Stomach (tissue), 19 donors: ENCODE measurements at regions of chr18 and their contacts with region 1.

Region 1: GRCh38 chr18:22800551-22800951 is 132.6 kb upstream of the RBBP8 start:
- DNase-seq: no peak
- H3K4me3 ChIP-seq: no peak overlapping the region
- H3K27ac ChIP-seq: no peak overlapping the region
- H3K4me1 ChIP-seq: peaks cover 0 to 5% (median 0%) of the 10 kb centered on the region in 4 donors
- H3K27me3 ChIP-seq: no peaks in the 10 kb centered on the region
- CTCF ChIP-seq: no peak
- EP300 ChIP-seq: no peak
- POLR2A ChIP-seq: no peak

Region 2: DNA sequence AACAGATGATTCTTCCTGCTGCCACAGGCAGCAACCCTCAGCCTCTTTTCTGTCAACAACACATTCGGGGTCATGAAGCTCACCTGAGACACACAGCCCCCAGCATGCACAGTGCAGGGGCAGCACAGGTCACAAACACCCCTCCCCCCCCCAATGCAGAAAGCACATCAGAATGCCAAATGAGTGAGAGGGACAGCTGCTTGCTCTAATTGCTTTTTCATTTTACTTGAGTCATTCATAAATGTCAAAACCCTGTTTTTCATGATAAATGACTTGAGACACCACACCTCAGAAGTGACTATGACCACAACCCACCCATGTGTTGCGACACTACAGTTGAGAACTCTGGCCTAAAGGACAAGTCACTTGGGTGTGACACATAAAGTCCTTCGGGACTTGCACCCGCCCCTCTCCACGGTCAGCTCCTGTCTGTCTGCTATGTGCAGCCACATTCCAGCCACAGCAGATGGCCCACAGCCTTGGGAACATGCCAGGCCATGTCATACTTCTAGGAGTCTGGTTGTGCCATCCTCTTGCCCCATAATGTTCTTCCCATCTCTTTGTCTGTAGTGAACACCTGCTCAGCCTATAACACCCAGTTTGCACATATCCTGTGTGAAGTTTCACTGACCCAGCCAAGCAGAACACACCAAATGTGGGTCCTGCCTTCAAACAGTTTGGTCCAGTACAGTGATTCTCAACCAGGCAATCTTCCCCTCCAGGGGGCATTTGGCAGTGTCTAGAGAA is 622.3 kb after region 1 on chr18:
- intact Hi-C with region 1: loop called (anchors 10 kb)
- DNase-seq: peak; percentile 57 to 79
- H3K4me3 ChIP-seq: no peak overlapping the region
- H3K27ac ChIP-seq: peak overlapping the region in 2 of 5 donors; percentile 40 to 43
- H3K4me1 ChIP-seq: peaks cover 0 to 5% (median 0%) of the 10 kb centered on the region in 4 donors
- H3K27me3 ChIP-seq: no peaks in the 10 kb centered on the region
- CTCF ChIP-seq: no peak
- EP300 ChIP-seq: no peak
- POLR2A ChIP-seq: no peak